ENCODE measurements at regions of chr13 and their contacts with region 1.

Region 1: GRCh38 chr13:88395804-88396203 is 724.6 kb downstream of the SLITRK5 start:
- DNase-seq: no peak
- ATAC-seq: no peak
- H3K4me3 ChIP-seq: no peak overlapping the region
- H3K27ac ChIP-seq: no peak overlapping the region
- H3K4me1 ChIP-seq: no peaks in the 10 kb centered on the region
- H3K27me3 ChIP-seq: no peaks in the 10 kb centered on the region
- CTCF ChIP-seq: no peak
- POLR2A ChIP-seq: no peak

Region 2: DNA sequence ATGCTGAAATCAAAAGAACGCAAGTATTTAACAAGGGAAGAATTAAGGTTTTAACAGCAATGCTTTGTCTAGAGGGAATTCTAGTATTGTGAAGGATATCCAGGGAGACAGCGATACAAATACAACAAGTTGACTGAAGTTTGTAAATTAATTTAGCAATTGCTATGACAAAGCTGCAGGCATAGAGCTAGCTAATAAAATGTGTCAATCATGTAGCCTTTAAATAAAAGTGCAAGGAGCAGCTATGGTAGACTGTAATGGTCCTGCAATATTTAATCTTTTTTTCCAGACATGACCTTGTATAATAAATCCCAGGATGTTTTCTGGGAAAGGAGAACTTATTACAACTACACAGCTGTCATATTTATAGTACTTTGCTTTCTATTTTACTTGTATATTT is 54.7 kb after region 1 on chr13:
- intact Hi-C with region 1: loop called in 1 of 10 experiments (anchors 2 kb)
- DNase-seq: no peak
- ATAC-seq: no peak
- H3K4me3 ChIP-seq: no peak overlapping the region
- H3K27ac ChIP-seq: no peak overlapping the region
- H3K4me1 ChIP-seq: no peaks in the 10 kb centered on the region
- H3K27me3 ChIP-seq: no peaks in the 10 kb centered on the region
- CTCF ChIP-seq: no peak
- POLR2A ChIP-seq: no peak

Measured in heart left ventricle (tissue), 16 donors.